HEK293 (cell line): ENCODE measurements at regions of chr1 and their contacts with region 1.

Region 1: DNA sequence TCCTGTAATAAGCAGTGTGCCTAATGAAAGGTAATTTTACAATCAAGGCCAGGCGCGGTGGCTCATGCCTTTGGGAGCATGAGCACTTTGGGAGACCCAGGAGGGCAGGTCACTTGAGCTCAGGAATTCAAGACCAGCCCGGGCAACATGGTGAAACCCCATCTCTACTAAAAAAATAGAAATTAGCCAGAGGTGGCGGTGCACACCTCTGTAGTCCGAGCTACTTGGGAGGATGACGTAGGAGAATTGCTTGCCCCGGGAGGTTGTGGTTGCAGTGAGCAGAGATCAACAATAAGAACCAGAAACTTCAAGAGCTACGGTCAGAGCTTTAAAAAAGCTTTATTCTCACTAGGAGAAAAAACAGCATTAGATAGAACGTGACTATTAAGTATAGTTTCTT is 35.0 kb downstream of the SFPQ start:
- H3K4me3 ChIP-seq: no peak overlapping the region
- H3K27ac ChIP-seq: no peak overlapping the region
- H3K4me1 ChIP-seq: no peaks in the 10 kb centered on the region
- CTCF ChIP-seq: no peak

Region 2: GRCh38 chr1:34865981-34866761 is 291.7 kb before region 1 on chr1:
- CTCF ChIA-PET with region 1: no interaction called
- POLR2A ChIA-PET with region 1: interaction called, 11 read pairs
- H3K4me3 ChIP-seq: peak overlapping the region; percentile 51
- H3K27ac ChIP-seq: peak overlapping the region; percentile 18; the same call in 1 of the 2 replicates
- H3K4me1 ChIP-seq: no peaks in the 10 kb centered on the region
- CTCF ChIP-seq: peak; percentile 94